ENCODE measurements at regions of chr5 and their contacts with region 1.

Region 1: DNA sequence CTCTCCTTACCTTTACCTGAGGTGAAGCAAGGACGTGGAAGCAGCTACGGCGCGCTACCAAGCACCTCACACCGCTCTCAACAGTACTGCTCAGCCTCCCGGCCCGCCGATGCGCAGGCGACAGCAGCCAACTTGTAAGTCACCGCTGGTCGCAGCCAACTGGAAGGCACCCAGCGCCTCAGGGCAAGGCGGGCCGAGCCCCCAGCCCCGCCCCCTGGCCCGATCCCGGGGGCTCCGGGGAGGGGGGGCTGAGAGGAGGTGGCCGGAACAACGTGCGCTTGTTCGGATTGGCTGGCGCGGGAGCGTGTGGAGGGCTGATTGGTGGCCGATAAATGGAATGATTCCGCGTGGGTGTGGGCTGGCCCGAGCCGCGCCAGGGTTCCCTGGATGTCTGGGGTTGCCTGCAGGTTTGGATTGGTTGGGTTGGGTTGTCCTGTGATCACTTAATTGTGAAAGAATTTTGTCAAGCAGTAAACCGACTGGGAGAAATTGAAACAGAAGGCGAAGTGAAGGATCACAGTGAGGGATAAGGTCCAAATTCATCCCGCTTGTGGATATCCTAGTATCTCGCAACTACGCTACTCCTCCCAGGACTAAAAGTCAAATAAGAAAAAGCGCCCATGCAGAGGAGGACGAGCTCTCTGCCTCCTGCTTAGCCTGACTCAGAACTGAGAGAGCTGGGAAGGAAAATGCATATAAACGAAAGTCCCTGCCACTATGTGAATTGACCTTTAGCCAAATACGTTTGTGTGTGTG is at the start of gene STARD4:
- DNase-seq: peak; percentile 93
- H3K4me3 Mint-ChIP-seq: peak within 1 kb of the TSS; percentile 92
- H3K27ac Mint-ChIP-seq: peak within 1 kb of the TSS; percentile 99
- H3K4me1 Mint-ChIP-seq: peaks cover 54% of the 10 kb centered on the region
- H3K27me3 Mint-ChIP-seq: no peaks in the 10 kb centered on the region
- total RNA-seq, gene STARD4: 222 and 230 TPM in 2 replicates

Region 2: DNA sequence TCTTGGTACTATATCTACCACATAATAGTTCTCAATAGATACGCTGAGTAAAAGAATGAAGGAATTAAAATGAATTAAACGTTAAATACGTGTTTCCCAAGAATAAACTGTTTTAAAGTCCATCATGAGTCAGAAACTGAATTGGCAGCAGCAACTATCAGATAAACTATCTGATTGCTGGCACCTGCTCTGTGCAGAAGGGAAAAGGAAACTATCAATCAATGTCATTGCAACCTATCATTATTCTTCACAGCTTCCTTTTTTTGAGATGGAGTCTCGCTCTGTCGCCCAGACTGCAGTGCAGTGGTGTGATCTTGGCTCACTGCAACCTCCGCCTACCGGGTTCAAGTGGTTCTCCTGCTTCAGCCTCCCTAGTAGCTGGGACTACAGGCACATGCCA is 429.2 kb before region 1 on chr5:
- intact Hi-C with region 1: no loop called
- DNase-seq: no peak
- H3K4me3 Mint-ChIP-seq: no peak overlapping the region
- H3K27ac Mint-ChIP-seq: no peak overlapping the region
- H3K4me1 Mint-ChIP-seq: no peaks in the 10 kb centered on the region
- H3K27me3 Mint-ChIP-seq: peaks cover 37% of the 10 kb centered on the region

Region 3: GRCh38 chr5:111223889-111224563 is 288.5 kb before region 1 on chr5 and contains the start of gene CAMK4:
- intact Hi-C with region 1: loop called (anchors 2 kb)
- DNase-seq: peak; percentile 74
- H3K4me3 Mint-ChIP-seq: peak within 1 kb of the TSS; percentile 97
- H3K27ac Mint-ChIP-seq: peak within 1 kb of the TSS; percentile 97
- H3K4me1 Mint-ChIP-seq: peaks cover 47% of the 10 kb centered on the region
- H3K27me3 Mint-ChIP-seq: no peaks in the 10 kb centered on the region
- total RNA-seq, gene CAMK4: 71.8 and 76.7 TPM in 2 replicates

Region 4: GRCh38 chr5:111486055-111486454 is 26.5 kb before region 1 on chr5:
- intact Hi-C with region 1: loop called (anchors 2 kb)
- DNase-seq: no peak
- H3K4me3 Mint-ChIP-seq: no peak overlapping the region
- H3K27ac Mint-ChIP-seq: no peak overlapping the region
- H3K4me1 Mint-ChIP-seq: peaks cover 14% of the 10 kb centered on the region
- H3K27me3 Mint-ChIP-seq: no peaks in the 10 kb centered on the region

Region 5: DNA sequence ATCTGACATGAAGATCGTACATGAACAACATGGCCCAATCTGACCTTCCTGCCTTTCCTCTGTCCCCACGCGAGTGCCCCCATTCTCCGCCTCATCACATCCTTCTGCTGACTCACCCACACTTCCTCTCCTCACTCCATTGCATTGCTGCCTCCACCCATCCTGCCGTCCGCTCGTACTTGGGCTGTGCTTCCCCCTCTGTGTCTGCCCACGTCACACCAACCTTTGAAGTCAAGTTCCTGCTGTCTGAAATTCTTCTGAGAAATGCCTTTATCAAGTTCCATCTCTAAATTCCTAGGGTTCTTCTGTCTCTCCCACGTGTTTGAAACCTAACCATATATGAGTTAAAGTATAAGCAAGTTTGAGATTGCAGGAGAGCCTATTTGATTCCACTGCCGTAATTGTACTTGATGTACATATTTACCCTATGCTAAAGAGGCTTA is 17.8 kb after region 1 on chr5:
- intact Hi-C with region 1: loop called (anchors 1 kb)
- DNase-seq: peak; percentile 80
- H3K4me3 Mint-ChIP-seq: peak overlapping the region; percentile 46
- H3K27ac Mint-ChIP-seq: peak overlapping the region; percentile 87
- H3K4me1 Mint-ChIP-seq: peaks cover 35% of the 10 kb centered on the region
- H3K27me3 Mint-ChIP-seq: no peaks in the 10 kb centered on the region

Region 6: DNA sequence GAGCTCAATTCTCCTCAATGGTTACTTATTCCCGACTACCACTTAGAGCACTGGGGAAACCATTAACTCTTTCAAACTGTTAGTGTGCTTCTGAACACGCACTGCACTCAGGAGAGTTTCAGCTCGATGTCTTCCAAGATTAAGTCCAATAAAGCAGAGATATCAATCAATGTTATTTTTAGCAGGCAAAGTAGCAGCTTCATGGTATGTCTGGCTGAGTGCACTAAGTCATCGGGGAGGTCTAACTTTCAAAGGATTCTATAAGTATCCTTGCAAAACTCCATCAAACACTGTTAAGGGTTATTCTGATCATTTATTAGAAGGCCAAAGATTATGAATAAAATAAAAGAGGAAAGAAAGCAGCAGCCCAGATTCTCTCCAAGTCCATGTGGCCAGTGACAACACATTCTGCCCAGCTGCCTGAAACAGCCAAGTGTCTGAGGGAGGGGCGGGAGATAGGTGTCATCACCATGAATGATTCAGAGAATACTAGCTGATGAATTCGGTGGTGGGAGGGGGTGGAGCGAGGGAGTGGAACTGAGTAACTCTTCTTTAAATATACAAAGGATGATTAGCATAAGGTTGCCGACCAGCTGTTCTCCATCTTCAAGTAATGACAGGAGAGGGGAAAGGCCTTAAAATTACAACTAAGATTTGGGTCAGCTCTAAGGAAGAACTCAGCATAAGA is 223.2 kb after region 1 on chr5:
- intact Hi-C with region 1: loop called (anchors 5 kb)
- DNase-seq: no peak
- H3K4me3 Mint-ChIP-seq: no peak overlapping the region
- H3K27ac Mint-ChIP-seq: peak overlapping the region; percentile 0
- H3K4me1 Mint-ChIP-seq: peaks cover 56% of the 10 kb centered on the region
- H3K27me3 Mint-ChIP-seq: no peaks in the 10 kb centered on the region

Region 7: DNA sequence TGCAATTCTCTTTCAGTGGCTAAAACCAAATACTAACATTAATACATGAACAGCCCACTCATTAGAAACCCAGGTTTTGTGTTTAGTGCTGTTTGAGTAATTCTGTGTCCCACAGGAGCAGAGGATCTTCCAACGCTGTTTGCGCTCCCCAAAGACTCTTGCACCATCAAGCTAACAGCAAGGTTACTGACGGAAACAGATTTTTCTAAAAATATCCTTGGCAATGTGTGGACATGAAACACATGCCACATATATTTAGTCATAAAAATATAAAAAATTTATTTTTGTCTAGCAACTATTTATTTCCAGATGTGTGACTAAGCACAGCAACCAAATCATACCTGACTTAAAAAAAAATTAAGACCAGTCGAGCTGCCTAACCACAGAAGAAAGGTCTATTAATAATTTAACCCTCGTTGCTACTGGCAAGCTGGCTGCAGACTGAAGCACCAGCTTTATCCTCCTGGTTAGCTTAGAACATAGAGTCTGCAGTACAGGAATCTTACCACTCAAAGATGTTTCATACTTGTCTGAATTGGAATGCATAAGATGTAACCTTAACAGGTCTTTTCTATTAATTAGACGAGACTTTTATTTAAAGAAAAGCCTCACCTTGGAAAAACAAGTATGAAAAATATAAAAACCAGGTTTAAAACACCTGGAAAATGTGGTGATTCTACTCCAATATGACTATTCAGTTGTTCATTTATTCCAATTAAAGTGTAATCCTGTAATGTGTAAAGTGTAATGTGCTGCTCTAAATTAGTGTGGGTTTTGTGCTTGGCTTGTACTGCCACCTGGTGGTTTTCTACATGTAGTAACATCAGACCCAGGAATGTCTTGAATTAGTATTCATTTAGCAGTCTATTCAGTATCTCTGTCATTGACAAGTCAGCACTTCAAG is 634.0 kb after region 1 on chr5:
- intact Hi-C with region 1: loop called (anchors 1 kb)
- DNase-seq: peak; percentile 20
- H3K4me3 Mint-ChIP-seq: no peak overlapping the region
- H3K27ac Mint-ChIP-seq: no peak overlapping the region
- H3K4me1 Mint-ChIP-seq: no peaks in the 10 kb centered on the region
- H3K27me3 Mint-ChIP-seq: peaks cover 12% of the 10 kb centered on the region

Region 8: GRCh38 chr5:112707187-112708102 is 1194.9 kb after region 1 on chr5:
- intact Hi-C with region 1: loop called (anchors 10 kb)
- DNase-seq: peak; percentile 98
- H3K4me3 Mint-ChIP-seq: peak overlapping the region; percentile 93
- H3K27ac Mint-ChIP-seq: peak overlapping the region; percentile 71
- H3K4me1 Mint-ChIP-seq: peaks cover 35% of the 10 kb centered on the region
- H3K27me3 Mint-ChIP-seq: peaks cover 3% of the 10 kb centered on the region

Measured in activated T-helper 2 cell treated with anti-CD3 and anti-CD28 coated beads, Interferon-gamma antibody, Interleukin-2, Interleukin-4, amounts not matched to agents 10 μg/mL and 5 μg/mL and 100 μg/mL, durations not matched to agents 14 hours and 24 hours and 36 hours (primary cell).